ENCODE measurements at regions of chr3 and their contacts with region 1.

Region 1: GRCh38 chr3:150603153-150603979 is at the start of gene SELENOT:
- DNase-seq: peak; percentile 96
- H3K4me3 ChIP-seq: peak within 1 kb of the TSS; percentile 76
- H3K27ac ChIP-seq: peak within 1 kb of the TSS; percentile 97
- H3K4me1 ChIP-seq: peaks cover 23% of the 10 kb centered on the region
- H3K27me3 ChIP-seq: no peaks in the 10 kb centered on the region
- CTCF ChIP-seq: peak; percentile 42
- total RNA-seq, gene SELENOT: 99.4 and 108 TPM in 2 replicates

Region 2: GRCh38 chr3:150703299-150704134 is 100.2 kb after region 1 on chr3 and contains the start of gene ERICH6:
- CTCF ChIA-PET with region 1: no interaction called
- POLR2A ChIA-PET with region 1: no interaction called
- intact Hi-C with region 1: loop called (anchors 5 kb)
- DNase-seq: peak; percentile 93
- H3K4me3 ChIP-seq: peak within 1 kb of the TSS; percentile 61
- H3K27ac ChIP-seq: peak within 1 kb of the TSS; percentile 10
- H3K4me1 ChIP-seq: no peaks in the 10 kb centered on the region
- H3K27me3 ChIP-seq: no peaks in the 10 kb centered on the region
- CTCF ChIP-seq: no peak
- total RNA-seq, gene ERICH6: 0.24 and 0.32 TPM in 2 replicates

Region 3: DNA sequence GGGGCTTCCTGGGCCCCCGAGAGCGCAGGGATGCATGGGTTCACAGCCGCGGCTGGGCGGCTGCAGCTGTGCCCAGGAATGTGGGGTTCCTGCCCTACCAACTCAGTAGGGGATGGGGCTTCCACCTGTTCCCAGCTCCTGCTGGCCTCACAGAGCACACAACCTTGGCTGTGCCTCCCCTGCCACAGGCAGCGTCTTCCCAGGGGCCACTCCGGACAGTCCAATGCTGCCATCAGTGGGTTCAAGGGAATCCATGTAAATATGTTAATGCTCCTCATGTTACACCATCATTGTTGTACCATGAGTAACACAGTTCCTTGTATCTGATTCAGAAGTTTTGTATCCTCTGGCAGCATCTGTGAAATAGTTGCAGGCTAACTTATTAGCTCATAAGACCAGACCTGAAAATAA is 171.7 kb after region 1 on chr3:
- CTCF ChIA-PET with region 1: no interaction called
- POLR2A ChIA-PET with region 1: no interaction called
- intact Hi-C with region 1: no loop called
- DNase-seq: no peak
- H3K4me3 ChIP-seq: no peak overlapping the region
- H3K27ac ChIP-seq: no peak overlapping the region
- H3K4me1 ChIP-seq: no peaks in the 10 kb centered on the region
- H3K27me3 ChIP-seq: no peaks in the 10 kb centered on the region
- CTCF ChIP-seq: no peak

Measured in A673 (cell line).